Vagina (tissue), 2 donors: ENCODE measurements at regions of chr17 and their contacts with region 1.

Region 1: GRCh38 chr17:64320613-64321553 is 57.8 kb upstream of the TEX2 start:
- DNase-seq: no peak
- H3K4me3 ChIP-seq: no peak overlapping the region
- H3K27ac ChIP-seq: no peak overlapping the region
- H3K4me1 ChIP-seq: peaks cover 6% of the 10 kb centered on the region
- H3K27me3 ChIP-seq: no peaks in the 10 kb centered on the region
- CTCF ChIP-seq: peak; percentile 42 to 84 (median 64)
- POLR2A ChIP-seq: no peak

Region 2: DNA sequence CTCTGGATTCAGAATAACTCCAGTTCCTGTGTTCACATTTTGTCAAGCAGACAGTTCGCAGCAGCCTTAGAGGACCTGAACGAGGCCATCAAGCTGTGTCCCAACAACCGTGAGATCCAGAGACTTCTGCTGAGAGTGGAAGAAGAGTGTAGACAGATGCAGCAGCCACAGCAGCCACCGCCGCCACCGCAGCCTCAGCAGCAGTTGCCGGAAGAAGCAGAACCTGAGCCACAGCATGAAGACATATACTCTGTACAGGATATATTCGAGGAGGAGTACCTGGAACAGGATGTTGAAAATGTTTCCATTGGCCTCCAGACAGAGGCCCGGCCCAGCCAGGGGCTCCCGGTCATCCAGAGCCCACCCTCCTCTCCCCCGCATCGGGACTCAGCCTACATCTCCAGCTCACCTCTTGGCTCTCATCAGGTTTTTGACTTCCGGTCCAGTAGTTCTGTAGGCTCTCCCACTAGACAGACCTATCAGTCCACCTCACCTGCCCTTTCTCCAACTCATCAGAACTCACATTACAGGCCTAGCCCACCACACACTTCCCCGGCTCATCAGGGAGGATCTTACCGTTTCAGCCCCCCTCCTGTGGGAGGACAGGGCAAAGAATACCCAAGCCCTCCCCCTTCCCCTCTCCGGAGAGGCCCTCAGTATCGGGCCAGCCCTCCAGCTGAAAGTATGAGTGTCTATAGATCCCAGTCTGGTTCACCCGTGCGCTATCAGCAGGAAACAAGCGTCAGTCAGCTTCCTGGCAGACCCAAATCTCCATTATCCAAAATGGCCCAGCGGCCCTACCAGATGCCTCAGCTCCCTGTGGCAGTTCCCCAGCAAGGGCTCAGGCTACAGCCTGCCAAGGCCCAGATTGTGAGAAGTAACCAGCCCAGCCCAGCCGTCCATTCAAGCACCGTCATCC is 900.7 kb before region 1 on chr17:
- intact Hi-C with region 1: no loop called
- DNase-seq: no peak
- H3K4me3 ChIP-seq: no peak overlapping the region
- H3K27ac ChIP-seq: no peak overlapping the region
- H3K4me1 ChIP-seq: no peaks in the 10 kb centered on the region
- H3K27me3 ChIP-seq: no peaks in the 10 kb centered on the region
- CTCF ChIP-seq: no peak
- POLR2A ChIP-seq: no peak

Region 3: GRCh38 chr17:64155751-64156544 is 164.9 kb before region 1 on chr17:
- intact Hi-C with region 1: no loop called
- DNase-seq: no peak
- H3K4me3 ChIP-seq: no peak overlapping the region
- H3K27ac ChIP-seq: peak overlapping the region; percentile 56
- H3K4me1 ChIP-seq: peaks cover 53% of the 10 kb centered on the region
- H3K27me3 ChIP-seq: no peaks in the 10 kb centered on the region
- CTCF ChIP-seq: no peak
- POLR2A ChIP-seq: no peak

Region 4: DNA sequence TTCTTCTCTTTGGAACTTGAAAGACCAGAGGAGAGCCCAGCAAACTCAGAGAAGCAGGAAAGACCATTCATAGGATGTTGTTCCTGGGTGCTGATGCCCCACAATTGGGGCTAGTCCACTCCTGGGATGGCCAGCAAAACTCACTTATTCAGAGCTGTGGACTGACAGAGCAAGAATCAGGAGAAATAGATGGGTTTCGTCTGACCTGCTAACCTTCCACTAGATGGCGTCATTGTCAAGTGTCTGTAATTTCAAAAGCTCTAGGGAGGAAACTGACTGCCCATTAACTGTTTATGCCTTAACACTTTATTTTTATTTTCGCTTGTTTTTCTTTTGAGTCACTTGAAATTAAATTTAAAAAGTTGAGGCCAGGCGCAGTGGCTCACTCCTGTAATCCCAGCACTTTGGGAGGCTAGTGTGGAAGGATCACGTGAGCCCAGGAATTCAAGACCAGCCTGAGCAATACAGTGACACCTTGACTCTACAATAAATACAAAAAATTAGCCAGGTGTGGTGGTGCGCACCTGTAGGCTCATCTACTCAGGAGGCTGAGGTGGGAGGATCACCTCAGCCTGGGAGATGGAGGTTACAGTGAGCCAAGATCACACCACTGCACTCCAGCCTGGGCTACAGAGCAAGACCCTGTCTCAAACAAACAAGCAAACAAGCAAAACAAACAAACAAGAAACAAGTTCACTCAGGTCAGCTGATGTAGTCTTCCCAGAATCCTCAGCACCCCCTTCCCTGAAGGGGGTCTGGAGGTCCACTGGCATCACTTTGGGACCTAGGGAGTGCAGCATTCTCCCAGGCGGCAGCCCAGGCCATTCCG is 99.5 kb after region 1 on chr17:
- intact Hi-C with region 1: loop called (anchors 1 kb)
- DNase-seq: no peak
- H3K4me3 ChIP-seq: no peak overlapping the region
- H3K27ac ChIP-seq: no peak overlapping the region
- H3K4me1 ChIP-seq: peaks cover 16% of the 10 kb centered on the region
- H3K27me3 ChIP-seq: no peaks in the 10 kb centered on the region
- CTCF ChIP-seq: peak; percentile 42 to 75 (median 69)
- POLR2A ChIP-seq: no peak

Region 5: DNA sequence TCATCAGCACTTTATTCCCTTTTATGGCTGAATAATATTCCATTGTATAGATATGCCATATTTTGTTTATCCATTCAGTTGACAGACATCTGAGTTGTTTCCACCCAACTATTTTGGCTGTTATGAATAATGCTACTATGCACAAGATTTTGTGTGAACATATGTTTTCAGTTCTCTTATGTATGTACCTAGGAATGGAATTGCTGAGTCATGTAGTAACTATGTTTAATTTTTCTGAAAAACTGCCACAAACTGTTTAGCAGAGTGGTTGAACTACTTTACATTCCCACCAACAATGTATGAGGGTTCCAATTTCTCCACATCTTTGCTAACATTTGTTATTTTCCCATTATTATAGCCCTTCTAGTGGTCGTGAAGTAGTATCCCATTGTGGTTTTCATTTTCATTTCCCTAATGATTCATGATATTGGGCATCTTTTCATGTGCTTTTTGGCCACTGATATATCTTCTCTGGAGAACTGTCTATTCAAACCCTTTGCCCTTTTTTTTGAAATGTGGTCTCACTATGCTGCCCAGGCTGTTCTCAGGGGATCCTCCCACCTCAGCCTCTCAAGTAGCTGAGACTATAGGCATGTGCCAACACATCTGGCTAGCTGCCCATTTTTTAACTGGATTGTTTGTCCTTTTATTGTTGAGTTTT is 314.9 kb after region 1 on chr17:
- intact Hi-C with region 1: loop called (anchors 5 kb)
- DNase-seq: no peak
- H3K4me3 ChIP-seq: no peak overlapping the region
- H3K27ac ChIP-seq: no peak overlapping the region
- H3K4me1 ChIP-seq: peaks cover 51% of the 10 kb centered on the region
- H3K27me3 ChIP-seq: no peaks in the 10 kb centered on the region
- CTCF ChIP-seq: no peak
- POLR2A ChIP-seq: no peak